HEK293 (cell line): ENCODE measurements at regions of chr12 and their contacts with region 1.

Region 1: GRCh38 chr12:55738123-55739024 is 4.5 kb upstream of the GDF11 start:
- H3K4me3 ChIP-seq: peak overlapping the region; percentile 43
- H3K27ac ChIP-seq: peak overlapping the region; percentile 43; the same call in 1 of the 2 replicates
- H3K4me1 ChIP-seq: peaks cover 11% of the 10 kb centered on the region; the same call in 1 of the 2 replicates
- CTCF ChIP-seq: peak; percentile 57; the same call in 1 of the 2 replicates

Region 2: GRCh38 chr12:55659486-55660385 is 78.6 kb before region 1 on chr12:
- CTCF ChIA-PET with region 1: interaction called, 38 read pairs
- POLR2A ChIA-PET with region 1: no interaction called
- H3K4me3 ChIP-seq: no peak overlapping the region
- H3K27ac ChIP-seq: no peak overlapping the region
- H3K4me1 ChIP-seq: no peaks in the 10 kb centered on the region
- CTCF ChIP-seq: peak; percentile 64

Region 3: DNA sequence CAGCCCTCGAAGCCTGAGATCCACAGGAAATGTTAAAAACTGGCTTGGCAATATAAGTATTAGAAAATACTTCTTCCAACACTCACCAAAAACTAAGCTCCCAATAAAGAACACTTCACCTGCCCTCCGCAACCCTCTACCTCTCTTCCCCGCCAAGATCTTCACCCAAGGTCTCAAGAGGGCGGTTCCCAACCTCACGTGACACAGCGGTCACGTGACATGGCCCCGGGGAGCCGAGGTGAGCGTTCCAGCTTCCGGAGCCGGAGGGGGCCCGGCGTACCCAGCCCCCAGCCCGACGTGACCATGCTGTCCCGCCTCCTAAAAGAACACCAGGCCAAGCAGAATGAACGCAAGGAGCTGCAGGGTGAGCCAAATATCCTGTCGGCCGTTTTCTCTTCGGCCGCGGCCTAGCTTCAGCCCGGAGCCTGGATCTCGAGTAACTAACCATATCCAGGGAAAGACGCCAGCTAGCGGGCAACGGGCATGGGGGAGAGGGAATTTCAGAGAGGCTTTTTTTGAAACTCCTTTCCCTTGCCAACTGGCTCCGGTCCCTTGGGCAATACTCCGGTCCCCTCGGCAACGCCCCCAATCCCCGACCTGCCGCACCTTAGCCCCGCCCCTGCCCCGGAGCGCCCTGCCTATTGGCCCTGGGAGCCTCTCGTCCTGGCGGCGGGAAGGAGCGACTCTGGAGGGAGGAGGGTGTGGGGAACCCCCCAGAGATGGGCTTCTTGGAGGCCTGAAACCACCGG is 22.4 kb before region 1 on chr12 and contains the start of gene BLOC1S1:
- CTCF ChIA-PET with region 1: interaction called, 127 read pairs
- POLR2A ChIA-PET with region 1: no interaction called
- H3K4me3 ChIP-seq: peak within 1 kb of the TSS; percentile 83
- H3K27ac ChIP-seq: peak within 1 kb of the TSS; percentile 77
- H3K4me1 ChIP-seq: peaks cover 13% of the 10 kb centered on the region; the same call in 1 of the 2 replicates
- CTCF ChIP-seq: peak; percentile 34; the same call in 1 of the 2 replicates

Region 4: DNA sequence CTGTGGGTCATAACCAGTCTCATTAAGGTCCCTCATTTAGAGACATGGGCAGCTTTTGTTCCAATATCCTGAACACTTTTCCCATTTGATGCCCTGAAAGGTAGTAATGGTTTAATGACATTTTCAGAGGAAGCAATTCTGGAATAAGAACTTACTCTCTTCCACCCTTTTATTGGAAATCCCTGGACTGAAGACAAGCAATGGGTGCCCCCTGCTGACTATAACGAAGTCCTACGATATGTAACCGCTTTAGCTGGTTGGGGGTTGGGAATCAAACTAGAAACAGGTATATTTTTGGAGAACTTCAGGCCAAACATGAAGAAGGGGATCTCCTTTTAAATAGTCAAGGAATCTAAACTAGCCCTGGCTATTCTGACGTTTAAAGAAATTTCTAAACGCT is 58.7 kb after region 1 on chr12:
- CTCF ChIA-PET with region 1: interaction called, 79 read pairs
- POLR2A ChIA-PET with region 1: interaction called, 5 read pairs
- H3K4me3 ChIP-seq: no peak overlapping the region
- H3K27ac ChIP-seq: no peak overlapping the region
- H3K4me1 ChIP-seq: no peaks in the 10 kb centered on the region; the same call in 1 of the 2 replicates
- CTCF ChIP-seq: peak; percentile 50; the same call in 1 of the 2 replicates

Region 5: GRCh38 chr12:55829967-55830600 is 91.7 kb after region 1 on chr12:
- CTCF ChIA-PET with region 1: interaction called, 13 read pairs
- POLR2A ChIA-PET with region 1: interaction called, 6 read pairs
- H3K4me3 ChIP-seq: peak overlapping the region; percentile 83
- H3K27ac ChIP-seq: peak overlapping the region; percentile 77
- H3K4me1 ChIP-seq: peaks cover 12% of the 10 kb centered on the region
- CTCF ChIP-seq: no peak; the same call in 1 of the 2 replicates

Region 6: DNA sequence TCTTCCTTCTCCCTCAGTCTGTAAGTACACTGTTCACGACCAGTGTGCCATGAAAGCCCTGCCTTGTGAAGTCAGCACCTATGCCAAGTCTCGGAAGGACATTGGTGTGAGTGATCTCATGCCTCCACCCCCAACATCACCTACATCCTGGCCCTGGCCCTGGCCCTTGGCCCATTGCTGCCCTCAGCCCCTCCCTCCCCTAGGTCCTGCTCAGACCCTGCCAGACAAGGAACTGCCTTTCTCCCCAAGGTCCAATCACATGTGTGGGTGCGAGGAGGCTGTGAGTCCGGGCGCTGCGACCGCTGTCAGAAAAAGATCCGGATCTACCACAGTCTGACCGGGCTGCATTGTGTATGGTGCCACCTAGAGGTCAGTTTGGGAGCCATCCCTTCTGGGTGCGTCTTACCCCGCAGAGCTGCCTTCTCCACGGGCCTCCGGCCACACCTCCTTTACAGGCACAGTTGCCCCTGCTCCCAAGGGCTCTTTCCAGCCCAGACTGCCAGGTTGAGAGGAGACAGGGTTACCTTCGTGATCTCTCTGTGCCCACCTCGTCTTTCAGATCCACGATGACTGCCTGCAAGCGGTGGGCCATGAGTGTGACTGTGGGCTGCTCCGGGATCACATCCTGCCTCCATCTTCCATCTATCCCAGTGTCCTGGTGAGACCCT is 201.8 kb after region 1 on chr12:
- CTCF ChIA-PET with region 1: interaction called, 21 read pairs
- POLR2A ChIA-PET with region 1: no interaction called
- H3K4me3 ChIP-seq: no peak overlapping the region
- H3K27ac ChIP-seq: no peak overlapping the region
- H3K4me1 ChIP-seq: no peaks in the 10 kb centered on the region
- CTCF ChIP-seq: peak; percentile 91

Region 7: GRCh38 chr12:56041552-56042429 is 303.4 kb after region 1 on chr12 and contains the start of gene RPS26:
- CTCF ChIA-PET with region 1: interaction called, 13 read pairs
- POLR2A ChIA-PET with region 1: interaction called, 4 read pairs
- H3K4me3 ChIP-seq: peak within 1 kb of the TSS; percentile 75
- H3K27ac ChIP-seq: peak within 1 kb of the TSS; percentile 93
- H3K4me1 ChIP-seq: peaks cover 19% of the 10 kb centered on the region
- CTCF ChIP-seq: peak; percentile 57

Region 8: GRCh38 chr12:56851462-56851861 is 1113.1 kb after region 1 on chr12:
- CTCF ChIA-PET with region 1: no interaction called
- POLR2A ChIA-PET with region 1: no interaction called
- H3K4me3 ChIP-seq: no peak overlapping the region
- H3K27ac ChIP-seq: no peak overlapping the region
- H3K4me1 ChIP-seq: no peaks in the 10 kb centered on the region
- CTCF ChIP-seq: no peak